Activated CD4-positive, alpha-beta memory T cell treated with anti-CD3 and anti-CD28 coated beads for 36 hours (primary cell): ENCODE measurements at regions of chr10 and their contacts with region 1.

Region 1: DNA sequence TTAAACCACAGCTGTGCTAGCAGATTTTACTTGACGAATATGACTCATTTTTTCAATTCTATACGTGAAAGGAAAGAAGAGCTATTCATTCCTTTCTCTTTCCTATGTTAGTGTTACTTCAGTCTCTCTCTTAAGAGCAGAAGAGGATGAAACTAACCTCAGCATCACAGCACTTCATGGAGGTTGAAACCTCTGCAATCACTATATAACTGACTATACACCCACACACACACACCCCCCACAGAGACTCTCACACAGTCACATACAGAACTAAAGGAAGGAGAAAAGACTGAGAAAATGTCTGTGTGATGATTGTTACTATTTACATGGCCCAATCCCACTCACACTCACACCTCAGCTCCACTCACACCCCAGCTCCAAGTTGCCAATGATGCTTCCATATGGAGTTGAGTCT is 104.2 kb downstream of the KIF20B start:
- DNase-seq: peak; percentile 84
- H3K4me3 Mint-ChIP-seq: no peak overlapping the region
- H3K27ac Mint-ChIP-seq: peak overlapping the region; percentile 4
- H3K4me1 Mint-ChIP-seq: peaks cover 19% of the 10 kb centered on the region
- H3K27me3 Mint-ChIP-seq: peaks cover 35% of the 10 kb centered on the region

Region 2: GRCh38 chr10:89643431-89644331 is 161.9 kb before region 1 on chr10:
- CTCF ChIA-PET with region 1: no interaction called
- POLR2A ChIA-PET with region 1: no interaction called
- intact Hi-C with region 1: loop called (anchors 1 kb)
- DNase-seq: peak; percentile 81
- H3K4me3 Mint-ChIP-seq: no peak overlapping the region
- H3K27ac Mint-ChIP-seq: no peak overlapping the region
- H3K4me1 Mint-ChIP-seq: peaks cover 7% of the 10 kb centered on the region
- H3K27me3 Mint-ChIP-seq: no peaks in the 10 kb centered on the region

Region 3: GRCh38 chr10:89837150-89837888 is 31.7 kb after region 1 on chr10:
- CTCF ChIA-PET with region 1: no interaction called
- POLR2A ChIA-PET with region 1: no interaction called
- intact Hi-C with region 1: loop called (anchors 2 kb)
- DNase-seq: peak; percentile 50
- H3K4me3 Mint-ChIP-seq: peak overlapping the region; percentile 66
- H3K27ac Mint-ChIP-seq: no peak overlapping the region
- H3K4me1 Mint-ChIP-seq: peaks cover 14% of the 10 kb centered on the region
- H3K27me3 Mint-ChIP-seq: peaks cover 2% of the 10 kb centered on the region

Region 4: DNA sequence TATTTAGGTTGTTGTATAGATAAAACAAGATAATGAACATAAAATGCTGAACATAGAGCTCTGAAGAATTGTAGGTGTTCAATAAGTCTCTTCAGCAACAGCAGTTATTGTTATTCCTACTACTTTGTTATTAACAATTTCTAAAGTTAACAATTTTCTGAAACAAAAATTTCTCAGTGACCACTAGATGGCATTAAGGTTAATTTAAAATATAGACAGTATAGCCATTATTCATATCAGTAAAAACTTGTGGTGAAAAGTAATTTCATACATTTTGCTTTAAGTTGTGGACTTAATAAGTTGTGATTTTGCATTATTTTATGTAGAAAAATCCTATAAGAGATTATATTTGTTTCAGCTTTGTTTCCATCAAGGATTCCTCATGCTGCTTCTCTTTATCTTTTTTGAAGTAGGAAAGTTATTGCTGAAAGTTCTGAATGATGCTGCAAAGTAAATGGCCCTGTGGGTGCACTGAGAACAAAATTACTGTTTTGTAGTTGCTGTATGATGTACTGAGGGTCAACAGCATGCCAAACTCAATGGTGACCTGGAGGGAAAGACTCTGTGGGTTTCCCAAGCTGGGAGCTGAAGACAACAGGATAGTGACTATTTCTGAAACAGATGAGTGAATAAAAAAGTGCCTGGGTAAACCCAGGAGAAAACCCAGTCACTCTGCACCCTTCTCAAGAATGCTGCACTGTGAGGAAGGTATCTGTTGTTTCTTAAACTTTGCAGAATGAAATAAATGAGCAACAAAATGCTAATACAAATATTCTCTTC is 149.4 kb after region 1 on chr10:
- CTCF ChIA-PET with region 1: no interaction called
- POLR2A ChIA-PET with region 1: no interaction called
- intact Hi-C with region 1: loop called (anchors 1 kb)
- DNase-seq: peak; percentile 20
- H3K4me3 Mint-ChIP-seq: no peak overlapping the region
- H3K27ac Mint-ChIP-seq: no peak overlapping the region
- H3K4me1 Mint-ChIP-seq: no peaks in the 10 kb centered on the region
- H3K27me3 Mint-ChIP-seq: peaks cover 3% of the 10 kb centered on the region

Region 5: DNA sequence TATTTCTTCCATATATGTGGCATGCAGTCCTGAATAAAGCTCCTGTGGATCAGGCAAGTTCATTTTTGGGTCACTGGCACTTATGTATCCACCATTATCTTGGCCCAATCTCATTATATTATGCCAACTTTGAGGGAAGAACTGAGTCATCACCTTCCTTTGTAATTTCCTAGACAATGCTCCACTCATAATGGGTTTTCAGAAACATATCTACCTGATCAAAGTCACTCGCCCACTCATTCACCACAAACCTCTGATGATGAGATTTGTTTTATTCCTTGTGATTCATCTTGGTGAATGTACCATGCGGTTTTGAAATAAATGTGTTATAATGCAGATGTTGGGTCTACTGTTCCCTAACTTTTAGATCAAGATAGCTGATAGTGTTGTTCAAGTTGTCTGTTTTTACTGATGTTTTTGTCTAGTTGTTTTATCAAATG is 421.6 kb after region 1 on chr10:
- CTCF ChIA-PET with region 1: no interaction called
- POLR2A ChIA-PET with region 1: no interaction called
- intact Hi-C with region 1: loop called (anchors 1 kb)
- DNase-seq: peak; percentile 47
- H3K4me3 Mint-ChIP-seq: no peak overlapping the region
- H3K27ac Mint-ChIP-seq: no peak overlapping the region
- H3K4me1 Mint-ChIP-seq: peaks cover 8% of the 10 kb centered on the region
- H3K27me3 Mint-ChIP-seq: peaks cover 18% of the 10 kb centered on the region